AG04450 (cell line): ENCODE measurements at regions of chr6 and their contacts with region 1.

Region 1: DNA sequence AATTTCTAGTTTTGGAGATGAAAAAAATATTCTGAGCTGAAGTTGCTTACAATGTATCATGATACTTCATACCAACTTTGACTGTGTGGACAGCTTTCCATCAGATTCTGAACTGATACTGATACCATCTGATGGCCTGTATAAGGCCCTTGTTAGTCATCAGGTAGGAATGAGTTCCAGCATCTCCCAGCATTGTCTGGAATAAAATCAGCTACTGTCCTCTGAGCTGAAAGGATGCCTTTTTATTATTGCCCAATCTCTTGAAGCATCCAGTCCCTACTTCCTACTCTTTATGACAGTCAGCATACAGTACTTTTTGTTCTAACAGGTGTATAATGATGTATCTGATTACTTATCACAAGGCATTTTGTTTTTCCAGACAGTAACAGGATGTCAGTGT is 70.6 kb upstream of the EYA4 start:
- DNase-seq: no peak
- H3K4me3 ChIP-seq: no peak overlapping the region
- H3K27ac ChIP-seq: no peak overlapping the region
- H3K27me3 ChIP-seq: no peaks in the 10 kb centered on the region
- CTCF ChIP-seq: no peak

Region 2: DNA sequence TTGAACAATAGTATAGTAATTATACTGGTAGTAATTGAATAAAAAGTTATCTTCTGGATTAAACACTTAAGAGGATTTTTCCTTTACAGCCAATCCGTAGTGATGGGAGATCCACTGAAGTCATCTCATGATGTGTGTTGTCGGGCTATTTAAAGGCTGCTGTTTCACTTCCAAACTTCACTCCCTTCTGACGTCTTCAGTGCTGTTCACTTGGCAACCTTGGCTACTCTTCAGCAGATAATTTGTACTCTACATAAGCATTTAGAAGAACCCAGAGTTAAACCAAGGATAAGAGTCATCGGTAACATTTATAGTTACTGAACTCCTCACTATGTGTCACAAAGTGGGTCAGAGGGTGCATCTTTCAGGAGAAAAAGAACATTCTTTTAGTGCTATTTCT is 108.5 kb before region 1 on chr6:
- CTCF ChIA-PET with region 1: no interaction called
- POLR2A ChIA-PET with region 1: interaction called, 15 read pairs
- DNase-seq: peak; percentile 93
- H3K4me3 ChIP-seq: no peak overlapping the region
- H3K27ac ChIP-seq: no peak overlapping the region
- H3K27me3 ChIP-seq: no peaks in the 10 kb centered on the region
- CTCF ChIP-seq: no peak